ENCODE measurements at regions of chr2 and their contacts with region 1.

Region 1: GRCh38 chr2:12716282-12717190 is at the start of gene TRIB2:
- DNase-seq: peak; percentile 76 to 91 (median 86)
- H3K4me3 ChIP-seq: peak within 1 kb of the TSS; percentile 48 to 93 (median 84)
- H3K27ac ChIP-seq: peak within 1 kb of the TSS; percentile 78 to 98 (median 94)
- H3K27me3 ChIP-seq: no peaks in the 10 kb centered on the region
- CTCF ChIP-seq: peak in 34 of 56 donors; percentile 1 to 59 (median 20)
- total RNA-seq, gene TRIB2: 21.5 to 86.6 (median 38.2) TPM

Region 2: DNA sequence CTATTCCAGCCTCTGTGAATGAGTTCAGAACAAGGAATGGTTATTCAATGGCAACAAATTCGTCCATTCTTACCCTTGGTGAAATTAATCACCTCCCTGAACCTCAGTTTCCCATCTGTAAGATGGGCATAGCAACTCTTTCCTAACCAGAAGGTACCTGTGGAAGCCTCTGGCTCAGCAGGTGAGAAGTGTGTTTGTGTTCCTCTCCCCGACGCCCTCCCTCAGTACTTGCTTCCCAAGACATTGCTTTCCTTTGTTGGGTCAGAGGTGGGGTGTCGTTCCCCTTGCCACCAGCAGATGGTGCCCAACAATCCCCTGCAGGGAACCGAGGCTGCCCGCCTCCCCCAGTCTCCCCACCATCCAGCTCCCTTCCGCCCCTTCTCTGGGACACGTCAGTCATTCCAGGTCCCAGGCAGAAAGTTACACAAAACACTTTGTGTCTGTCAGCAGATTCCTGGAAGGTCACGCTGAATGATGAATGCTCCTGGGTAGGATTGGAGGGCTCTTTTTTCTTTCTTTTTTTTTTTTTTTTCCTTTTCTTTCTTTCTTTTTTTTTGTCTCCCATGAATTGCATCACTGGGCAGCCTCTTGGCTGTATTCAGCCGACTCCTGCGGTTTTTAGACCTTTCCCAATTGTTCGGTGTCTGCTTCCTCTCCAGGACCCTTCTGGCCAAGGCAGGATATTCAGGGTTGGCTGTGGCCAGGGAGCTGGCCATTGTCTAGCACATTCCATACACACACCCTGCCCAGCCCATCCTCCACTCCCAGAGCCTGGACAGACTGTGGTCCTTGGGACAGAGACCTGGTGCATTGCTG is 852.8 kb before region 1 on chr2:
- intact Hi-C with region 1: loop called (anchors 5 to 10 kb)
- DNase-seq: peak; percentile 37 to 88 (median 79)
- H3K4me3 ChIP-seq: peak overlapping the region in 16 of 59 donors; percentile 2 to 37 (median 16)
- H3K27ac ChIP-seq: peak overlapping the region in 13 of 59 donors; percentile 5 to 67 (median 33)
- H3K27me3 ChIP-seq: no peaks in the 10 kb centered on the region
- CTCF ChIP-seq: peak; percentile 82 to 98 (median 96)

Region 3: GRCh38 chr2:12430407-12431133 is 286.0 kb before region 1 on chr2:
- intact Hi-C with region 1: loop called in 1 of 2 experiments (anchors 10 kb)
- DNase-seq: no peak
- H3K4me3 ChIP-seq: no peak overlapping the region
- H3K27ac ChIP-seq: peak overlapping the region in 7 of 59 donors; percentile 1 to 52 (median 22)
- H3K27me3 ChIP-seq: no peaks in the 10 kb centered on the region
- CTCF ChIP-seq: no peak

Region 4: GRCh38 chr2:12931186-12931844 is 214.8 kb after region 1 on chr2:
- intact Hi-C with region 1: loop called (anchors 2 kb)
- DNase-seq: no peak
- H3K4me3 ChIP-seq: no peak overlapping the region
- H3K27ac ChIP-seq: no peak overlapping the region
- H3K27me3 ChIP-seq: no peaks in the 10 kb centered on the region
- CTCF ChIP-seq: peak; percentile 68 to 96 (median 90)

Region 5: DNA sequence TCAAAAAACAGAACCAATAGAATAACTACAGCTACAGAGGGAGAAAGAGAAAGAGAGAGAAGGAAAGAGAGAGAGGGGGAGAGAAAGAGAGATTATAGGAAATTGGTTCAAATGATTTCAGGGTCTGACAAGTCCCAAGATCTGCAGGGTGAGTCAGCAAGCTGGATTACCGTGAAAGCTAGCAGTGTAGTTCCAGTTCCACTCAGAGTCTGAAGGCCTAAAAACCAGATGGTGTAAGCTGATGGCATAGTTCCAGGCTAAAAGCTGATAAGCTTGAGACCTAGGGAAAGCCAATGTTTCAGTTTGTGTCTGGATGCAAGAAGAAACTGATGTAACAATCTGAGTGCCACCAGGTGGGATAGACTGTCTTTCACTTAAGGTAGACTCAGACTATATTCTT is 397.9 kb after region 1 on chr2:
- intact Hi-C with region 1: no loop called
- DNase-seq: peak in 1 of 10 donors; percentile 10
- H3K4me3 ChIP-seq: no peak overlapping the region
- H3K27ac ChIP-seq: no peak overlapping the region
- H3K27me3 ChIP-seq: peaks cover 0 to 3% (median 0%) of the 10 kb centered on the region in 45 donors
- CTCF ChIP-seq: no peak